ENCODE measurements at regions of chr2 and their contacts with region 1.

Region 1: DNA sequence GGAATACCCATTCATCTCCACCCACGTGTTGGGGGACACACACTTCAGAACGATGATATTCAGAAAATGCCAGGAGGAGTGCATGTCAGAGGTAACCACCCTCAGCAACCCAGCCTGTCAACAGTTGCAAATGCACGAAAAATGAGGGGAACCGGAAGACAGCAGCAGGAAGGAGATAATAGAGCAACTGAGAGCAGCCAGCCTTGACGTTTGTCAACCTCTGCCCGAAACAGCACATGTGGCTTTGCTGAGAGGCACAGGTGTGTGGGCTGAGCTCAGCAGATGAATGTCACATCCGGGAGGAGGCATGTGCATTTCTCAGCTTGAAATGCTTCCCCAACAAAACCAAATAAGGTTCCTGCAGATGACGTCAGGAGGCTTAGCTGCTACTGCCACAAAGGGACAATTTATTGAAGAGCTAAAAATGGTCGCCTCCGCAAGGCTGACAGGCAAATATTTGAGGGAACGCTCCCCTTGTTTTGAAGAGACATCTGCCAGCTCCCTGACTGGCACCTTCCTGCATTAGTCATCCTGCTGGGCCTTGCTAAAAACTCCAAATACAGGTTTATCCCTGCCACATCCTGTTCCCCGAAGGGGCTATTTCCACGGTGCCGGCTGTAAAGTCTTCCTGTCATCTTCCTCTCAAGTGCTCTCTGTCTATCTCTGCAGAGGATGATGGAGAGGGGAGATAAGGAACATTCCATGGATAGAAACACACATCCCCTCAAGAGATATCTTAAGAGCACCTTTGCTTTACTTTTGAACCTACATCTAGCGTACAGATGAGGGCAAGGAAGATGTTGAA is 418.9 kb downstream of the NBAS start:
- DNase-seq: peak; percentile 65 to 83 (median 80)
- H3K4me3 ChIP-seq: no peak overlapping the region
- H3K4me3 Mint-ChIP-seq: peak overlapping the region in 7 of 8 donors; percentile 43 to 80 (median 71)
- H3K27ac ChIP-seq: peak overlapping the region; percentile 16
- H3K27ac Mint-ChIP-seq: peak overlapping the region; percentile 27 to 95 (median 89)
- H3K4me1 ChIP-seq: peaks cover 18% of the 10 kb centered on the region
- H3K4me1 Mint-ChIP-seq: peaks cover 12 to 22% (median 17%) of the 10 kb centered on the region in 4 donors
- H3K27me3 ChIP-seq: no peaks in the 10 kb centered on the region
- H3K27me3 Mint-ChIP-seq: no peaks in the 10 kb centered on the region

Region 2: DNA sequence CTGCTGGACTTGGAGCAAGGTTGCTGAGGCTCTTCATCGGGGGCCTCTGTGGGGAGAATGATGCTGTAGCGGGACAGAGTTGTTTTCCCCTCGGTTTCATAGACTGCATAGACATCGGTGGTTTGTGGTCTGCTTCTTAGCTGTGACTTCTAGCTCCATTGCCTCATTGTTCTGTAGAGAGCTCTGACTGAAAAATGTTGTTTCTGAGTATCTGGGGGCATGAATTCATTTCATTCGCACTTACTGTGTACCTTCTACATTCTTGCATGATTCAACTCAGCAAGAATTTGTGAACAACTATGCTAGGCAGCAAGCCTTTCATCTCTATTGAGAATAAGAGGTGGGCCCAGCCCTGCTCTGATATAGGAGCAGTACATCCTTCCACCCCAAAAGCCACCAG is 12.0 kb after region 1 on chr2:
- CTCF ChIA-PET with region 1: no interaction called
- POLR2A ChIA-PET with region 1: no interaction called
- intact Hi-C with region 1: no loop called
- DNase-seq: no peak
- H3K4me3 ChIP-seq: no peak overlapping the region
- H3K4me3 Mint-ChIP-seq: no peak overlapping the region
- H3K27ac ChIP-seq: no peak overlapping the region
- H3K27ac Mint-ChIP-seq: no peak overlapping the region
- H3K4me1 ChIP-seq: no peaks in the 10 kb centered on the region
- H3K4me1 Mint-ChIP-seq: no peaks in the 10 kb centered on the region
- H3K27me3 ChIP-seq: no peaks in the 10 kb centered on the region
- H3K27me3 Mint-ChIP-seq: no peaks in the 10 kb centered on the region

Region 3: DNA sequence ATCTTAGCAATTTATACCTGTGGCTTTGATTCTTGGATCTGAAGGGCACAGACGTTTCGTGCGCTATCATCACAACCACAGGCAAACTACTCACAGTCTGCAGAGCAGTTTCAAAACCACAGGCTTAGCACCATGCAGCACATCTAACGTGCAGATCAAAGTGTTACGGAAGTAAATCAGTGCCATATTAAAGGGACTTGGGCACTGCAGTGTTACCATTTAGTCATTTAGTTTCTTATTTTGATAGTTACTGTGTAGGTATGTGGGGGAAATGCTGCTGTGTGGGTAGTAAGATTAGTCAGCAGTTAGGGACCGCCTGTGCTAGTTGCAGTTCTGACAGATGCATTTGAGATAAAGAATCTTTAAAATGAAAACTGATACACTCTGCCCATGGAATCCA is 34.8 kb after region 1 on chr2:
- CTCF ChIA-PET with region 1: no interaction called
- POLR2A ChIA-PET with region 1: no interaction called
- intact Hi-C with region 1: loop called (anchors 5 kb)
- DNase-seq: peak; percentile 72 to 84 (median 80)
- H3K4me3 ChIP-seq: no peak overlapping the region
- H3K4me3 Mint-ChIP-seq: peak overlapping the region; percentile 5 to 75 (median 49)
- H3K27ac ChIP-seq: no peak overlapping the region
- H3K27ac Mint-ChIP-seq: peak overlapping the region; percentile 73 to 91 (median 84)
- H3K4me1 ChIP-seq: peaks cover 37% of the 10 kb centered on the region
- H3K4me1 Mint-ChIP-seq: peaks cover 25 to 52% (median 41%) of the 10 kb centered on the region in 4 donors
- H3K27me3 ChIP-seq: no peaks in the 10 kb centered on the region
- H3K27me3 Mint-ChIP-seq: no peaks in the 10 kb centered on the region

Region 4: GRCh38 chr2:15591692-15592463 is 449.6 kb after region 1 on chr2 and contains the start of gene DDX1:
- CTCF ChIA-PET with region 1: no interaction called
- POLR2A ChIA-PET with region 1: interaction called, 3 read pairs
- intact Hi-C with region 1: loop called (anchors 1 kb)
- DNase-seq: peak; percentile 83 to 86 (median 84)
- H3K4me3 ChIP-seq: peak within 1 kb of the TSS; percentile 48 to 71
- H3K4me3 Mint-ChIP-seq: peak within 1 kb of the TSS; percentile 86 to 96 (median 92)
- H3K27ac ChIP-seq: peak within 1 kb of the TSS; percentile 76
- H3K27ac Mint-ChIP-seq: peak within 1 kb of the TSS; percentile 87 to 97 (median 95)
- H3K4me1 ChIP-seq: peaks cover 31% of the 10 kb centered on the region
- H3K4me1 Mint-ChIP-seq: peaks cover 27 to 47% (median 34%) of the 10 kb centered on the region in 4 donors
- H3K27me3 ChIP-seq: no peaks in the 10 kb centered on the region
- H3K27me3 Mint-ChIP-seq: no peaks in the 10 kb centered on the region
- total RNA-seq, gene DDX1: 58.3 to 61.7 TPM